GM18951 (cell line): ENCODE measurements at regions of chrX and their contacts with region 1.

Region 1: DNA sequence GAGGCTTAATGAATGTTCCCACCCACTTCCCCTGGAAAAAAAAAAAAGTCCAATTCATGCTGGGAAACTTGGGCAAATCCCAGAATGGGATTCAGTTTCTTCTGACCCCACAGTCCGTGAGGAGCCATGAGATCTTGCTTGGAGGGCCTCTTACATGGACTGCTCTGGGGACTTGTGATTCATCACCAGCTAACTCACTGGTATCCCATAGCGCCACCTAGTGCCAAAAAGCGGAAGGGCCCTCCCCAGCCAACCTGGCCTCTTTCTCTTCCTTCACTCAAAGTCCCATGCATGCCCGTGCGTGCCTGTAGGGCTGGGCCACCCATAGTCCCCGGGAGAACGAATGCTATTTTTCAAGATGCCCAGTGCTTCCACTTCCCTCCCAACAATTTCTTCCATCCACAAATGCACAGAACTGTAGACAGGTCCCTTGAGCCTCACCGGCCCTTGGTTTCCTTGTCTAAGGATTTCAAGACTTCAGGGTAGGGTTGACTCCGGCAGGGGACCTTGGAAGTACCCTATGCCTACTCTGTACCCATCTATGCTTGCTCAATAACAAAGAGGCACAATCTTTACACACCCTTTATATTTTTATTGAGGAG is 5.1 kb downstream of the RTL5 start:
- POLR2A ChIP-seq: no peak

Region 2: DNA sequence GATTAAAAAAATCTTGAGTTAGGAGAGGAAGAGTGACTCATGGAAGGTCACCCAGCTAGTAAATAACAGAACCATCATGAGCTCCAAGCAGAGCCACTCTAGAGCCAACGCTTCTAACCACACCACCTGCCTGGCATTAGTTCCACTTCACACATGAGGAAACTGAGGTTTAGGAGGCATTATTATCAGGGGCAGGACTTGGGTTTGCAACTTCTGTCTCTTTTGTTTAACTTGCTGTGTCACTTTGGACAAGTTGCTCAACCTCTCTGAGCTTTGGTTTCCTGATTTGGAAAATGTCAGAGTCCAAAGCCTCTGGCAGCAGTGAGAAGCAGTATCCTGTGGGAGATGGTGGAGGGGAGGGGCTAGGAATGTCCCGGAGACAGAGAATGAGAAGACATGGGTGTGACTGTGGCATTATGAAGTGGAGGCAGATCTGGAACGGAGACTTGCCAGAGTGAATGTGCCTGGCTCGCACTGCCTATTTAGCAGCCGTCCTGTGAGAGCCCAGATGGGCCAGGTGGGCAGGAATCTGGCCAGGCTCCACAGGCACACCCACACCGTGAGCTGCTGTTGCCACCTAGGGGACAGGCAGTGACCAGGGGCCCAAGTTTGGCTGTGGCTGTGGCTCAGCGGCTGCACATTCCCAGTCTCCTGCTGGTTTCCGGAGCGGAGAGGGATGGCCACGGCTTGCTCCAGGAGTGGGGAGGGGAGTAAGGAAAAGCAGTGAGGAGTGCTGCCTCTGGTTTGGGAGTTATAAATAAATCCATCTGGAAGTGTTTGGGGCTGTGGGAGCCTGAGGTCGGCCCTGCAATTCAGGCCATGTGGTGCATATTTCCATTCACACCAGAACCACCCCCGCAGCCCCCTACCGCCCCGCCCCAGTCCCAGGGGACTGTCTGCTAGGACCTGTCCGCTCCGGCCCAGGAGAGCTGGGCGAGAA is 122.6 kb before region 1 on chrX:
- in situ Hi-C with region 1: loop called (anchors 10 kb)
- POLR2A ChIP-seq: no peak